ENCODE measurements at regions of chr17 and their contacts with region 1.

Region 1: DNA sequence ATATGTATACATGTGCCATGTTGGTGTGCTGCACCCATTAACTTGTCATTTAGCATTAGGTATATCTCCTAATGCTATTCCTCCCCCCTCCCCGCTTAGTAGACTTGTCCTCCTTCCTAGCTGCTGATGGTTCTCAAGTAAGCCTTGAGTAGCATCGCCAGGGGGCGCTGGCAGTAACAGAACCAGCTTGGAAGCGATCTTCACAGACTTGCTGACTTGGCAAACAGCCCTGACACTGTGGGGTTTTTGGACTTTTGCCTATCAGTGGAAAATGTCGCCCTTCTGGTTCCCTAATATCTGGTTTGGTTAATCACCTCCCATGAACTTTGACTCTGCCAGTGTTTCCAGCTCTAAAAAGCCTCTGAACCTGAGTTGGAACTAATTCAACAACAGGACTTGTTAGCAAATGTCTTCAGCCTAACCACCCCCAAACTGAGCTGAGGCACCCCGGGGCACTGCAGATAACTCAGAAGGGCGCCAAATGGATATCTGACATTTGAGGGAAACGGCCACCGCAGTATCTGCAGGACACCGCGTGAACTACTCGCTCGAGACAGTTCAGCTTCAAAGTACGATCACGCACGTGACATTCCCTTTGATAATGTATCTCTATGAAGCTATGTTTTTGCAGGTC is 15.4 kb upstream of the SPATA32 start:
- DNase-seq: peak; percentile 90
- H3K4me3 Mint-ChIP-seq: no peak overlapping the region
- H3K27ac Mint-ChIP-seq: no peak overlapping the region
- H3K4me1 Mint-ChIP-seq: peaks cover 9% of the 10 kb centered on the region
- H3K27me3 Mint-ChIP-seq: no peaks in the 10 kb centered on the region
- CTCF ChIP-seq: peak; percentile 73

Region 2: DNA sequence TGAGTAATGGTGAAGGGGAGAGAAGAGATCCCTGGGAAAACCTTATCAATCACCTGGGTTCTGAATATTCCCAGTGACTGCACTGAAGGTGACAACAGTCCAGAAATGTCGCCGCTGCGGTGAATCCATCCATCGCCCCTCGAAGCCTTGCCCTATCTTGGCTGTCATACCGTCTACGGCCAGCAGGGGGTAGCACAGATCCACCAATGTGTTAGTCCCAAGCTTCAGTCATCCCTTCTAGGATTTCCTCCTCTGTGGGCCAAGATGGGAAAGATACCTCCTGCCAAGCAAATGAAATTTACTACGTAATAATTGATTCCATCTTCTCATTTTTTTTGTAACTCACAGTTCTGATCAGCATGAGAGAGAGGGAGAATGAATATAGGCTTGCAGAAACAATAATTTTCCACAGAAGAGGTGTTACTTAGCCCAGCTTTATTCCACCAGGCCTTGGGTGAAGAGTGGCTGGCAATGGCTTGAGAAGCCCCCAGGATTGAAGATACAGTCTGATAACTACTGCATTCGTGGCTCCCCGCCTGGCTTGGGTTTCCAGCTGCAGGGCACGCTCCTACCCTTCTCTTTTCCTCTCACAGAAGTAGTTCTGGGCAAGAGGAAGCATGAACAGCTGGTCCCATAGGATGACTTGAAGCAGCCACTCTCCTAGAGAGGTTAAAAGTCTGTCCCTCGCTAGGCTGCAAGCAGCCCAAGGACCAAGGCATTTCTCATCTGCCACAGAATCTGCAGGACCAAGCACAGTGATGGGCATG is 58.3 kb before region 1 on chr17:
- CTCF ChIA-PET with region 1: interaction called, 31 read pairs
- POLR2A ChIA-PET with region 1: no interaction called
- intact Hi-C with region 1: loop called (anchors 5 kb)
- DNase-seq: peak; percentile 86
- H3K4me3 Mint-ChIP-seq: no peak overlapping the region
- H3K27ac Mint-ChIP-seq: no peak overlapping the region
- H3K4me1 Mint-ChIP-seq: peaks cover 11% of the 10 kb centered on the region
- H3K27me3 Mint-ChIP-seq: no peaks in the 10 kb centered on the region
- CTCF ChIP-seq: peak; percentile 95

Region 3: GRCh38 chr17:45231213-45232116 is 45.9 kb before region 1 on chr17:
- CTCF ChIA-PET with region 1: no interaction called
- POLR2A ChIA-PET with region 1: no interaction called
- intact Hi-C with region 1: no loop called
- DNase-seq: no peak
- H3K4me3 Mint-ChIP-seq: no peak overlapping the region
- H3K27ac Mint-ChIP-seq: peak overlapping the region; percentile 70
- H3K4me1 Mint-ChIP-seq: peaks cover 35% of the 10 kb centered on the region
- H3K27me3 Mint-ChIP-seq: no peaks in the 10 kb centered on the region
- CTCF ChIP-seq: no peak

Region 4: GRCh38 chr17:45265821-45266220 is 11.5 kb before region 1 on chr17:
- CTCF ChIA-PET with region 1: interaction called, 23 read pairs
- POLR2A ChIA-PET with region 1: interaction called, 4 read pairs
- intact Hi-C with region 1: no loop called
- DNase-seq: peak; percentile 51
- H3K4me3 Mint-ChIP-seq: no peak overlapping the region
- H3K27ac Mint-ChIP-seq: no peak overlapping the region
- H3K4me1 Mint-ChIP-seq: no peaks in the 10 kb centered on the region
- H3K27me3 Mint-ChIP-seq: no peaks in the 10 kb centered on the region
- CTCF ChIP-seq: no peak

Region 5: DNA sequence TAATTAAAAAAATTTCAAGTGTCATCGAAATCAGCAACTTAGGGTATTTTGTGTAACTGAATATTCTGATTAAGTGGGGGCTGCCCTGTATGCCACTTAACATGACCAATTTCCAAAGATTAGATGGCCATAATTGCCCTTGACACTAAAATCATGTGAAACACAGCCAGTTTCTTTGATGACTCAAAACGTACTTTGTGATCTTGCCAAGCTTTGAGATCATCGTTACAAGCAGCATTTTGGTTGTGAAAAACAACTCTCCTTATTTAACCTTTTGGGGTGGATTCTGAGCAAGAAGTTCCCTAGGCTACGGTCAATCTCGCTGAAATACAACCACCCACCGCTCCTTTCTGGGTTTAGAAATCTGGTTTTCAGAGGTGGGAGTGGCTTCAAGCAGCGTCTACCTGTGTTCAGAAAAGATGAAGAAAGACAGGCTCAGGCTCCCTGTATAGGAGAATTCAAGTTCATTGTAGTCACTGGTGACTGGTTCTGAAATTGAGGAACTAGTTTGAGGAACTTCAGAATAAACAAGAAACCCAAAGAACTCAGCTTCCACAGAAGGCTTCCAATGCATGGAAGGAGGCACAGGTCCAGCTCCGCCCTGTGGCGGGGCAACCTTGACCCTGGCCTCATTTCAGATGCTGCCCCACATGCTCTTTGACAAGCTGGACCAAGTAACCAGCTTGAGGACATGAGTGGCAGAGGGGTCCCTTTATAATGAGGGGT is 30.1 kb after region 1 on chr17:
- CTCF ChIA-PET with region 1: interaction called, 17 read pairs
- POLR2A ChIA-PET with region 1: interaction called, 5 read pairs
- intact Hi-C with region 1: no loop called
- DNase-seq: peak; percentile 88
- H3K4me3 Mint-ChIP-seq: peak overlapping the region; percentile 32
- H3K27ac Mint-ChIP-seq: peak overlapping the region; percentile 90
- H3K4me1 Mint-ChIP-seq: peaks cover 21% of the 10 kb centered on the region
- H3K27me3 Mint-ChIP-seq: no peaks in the 10 kb centered on the region
- CTCF ChIP-seq: no peak

Region 6: DNA sequence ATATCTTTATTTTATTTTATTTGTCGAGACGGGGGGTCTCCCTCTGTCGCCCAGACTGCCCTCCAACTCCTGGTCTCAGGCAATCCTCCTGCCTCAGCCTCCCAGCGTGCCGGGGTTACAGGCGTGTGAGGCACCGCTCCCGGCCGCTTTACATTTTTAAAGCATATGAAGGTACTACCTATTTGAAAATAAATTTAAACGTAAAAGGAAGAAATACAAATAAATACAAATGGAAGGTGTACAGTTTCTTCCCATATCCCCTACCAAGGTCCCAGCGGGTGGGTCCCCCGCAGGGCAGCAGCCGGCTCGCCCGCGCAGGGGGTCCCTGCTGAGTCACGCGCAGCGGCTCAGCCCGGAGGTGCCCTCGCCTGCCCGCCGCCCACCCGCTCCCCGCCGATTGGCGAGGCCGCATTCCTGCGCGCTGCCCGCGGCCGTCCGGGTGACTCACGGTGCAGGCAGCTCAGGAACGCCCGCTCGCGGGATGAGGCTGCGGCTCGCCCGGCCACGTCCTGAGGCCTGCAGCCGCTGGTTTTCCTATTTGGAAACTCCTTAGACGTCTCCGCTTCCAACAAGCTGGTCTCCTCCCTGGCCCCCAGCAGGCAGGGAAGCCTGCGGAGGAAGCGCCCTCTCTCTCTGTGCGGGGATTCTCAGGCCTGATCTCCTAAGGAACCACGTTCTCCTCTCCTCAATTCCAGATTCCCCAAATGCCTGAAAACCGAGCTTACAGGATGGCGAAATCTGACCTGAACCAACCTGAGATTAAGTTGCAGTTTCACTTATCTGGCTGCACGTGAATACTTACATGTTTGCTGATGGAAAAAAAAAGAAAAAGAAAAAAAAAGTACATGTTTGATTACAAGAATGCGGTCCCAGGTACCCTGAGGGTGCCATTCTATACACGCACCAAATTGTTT is 94.3 kb after region 1 on chr17:
- CTCF ChIA-PET with region 1: interaction called, 14 read pairs
- POLR2A ChIA-PET with region 1: interaction called, 6 read pairs
- intact Hi-C with region 1: no loop called
- DNase-seq: peak; percentile 95
- H3K4me3 Mint-ChIP-seq: peak overlapping the region; percentile 83
- H3K27ac Mint-ChIP-seq: peak overlapping the region; percentile 95
- H3K4me1 Mint-ChIP-seq: peaks cover 35% of the 10 kb centered on the region
- H3K27me3 Mint-ChIP-seq: no peaks in the 10 kb centered on the region
- CTCF ChIP-seq: no peak